ENCODE measurements at regions of chr18 and their contacts with region 1.

Region 1: GRCh38 chr18:13447626-13448334 is 229.2 kb downstream of the LDLRAD4 start:
- DNase-seq: peak; percentile 71 to 82
- ATAC-seq: peak; percentile 87 to 91 (median 89)
- H3K4me3 ChIP-seq: peak overlapping the region; percentile 40
- H3K27ac ChIP-seq: peak overlapping the region; percentile 28
- H3K4me1 ChIP-seq: peaks cover 46% of the 10 kb centered on the region
- H3K27me3 ChIP-seq: no peaks in the 10 kb centered on the region
- CTCF ChIP-seq: no peak

Region 2: DNA sequence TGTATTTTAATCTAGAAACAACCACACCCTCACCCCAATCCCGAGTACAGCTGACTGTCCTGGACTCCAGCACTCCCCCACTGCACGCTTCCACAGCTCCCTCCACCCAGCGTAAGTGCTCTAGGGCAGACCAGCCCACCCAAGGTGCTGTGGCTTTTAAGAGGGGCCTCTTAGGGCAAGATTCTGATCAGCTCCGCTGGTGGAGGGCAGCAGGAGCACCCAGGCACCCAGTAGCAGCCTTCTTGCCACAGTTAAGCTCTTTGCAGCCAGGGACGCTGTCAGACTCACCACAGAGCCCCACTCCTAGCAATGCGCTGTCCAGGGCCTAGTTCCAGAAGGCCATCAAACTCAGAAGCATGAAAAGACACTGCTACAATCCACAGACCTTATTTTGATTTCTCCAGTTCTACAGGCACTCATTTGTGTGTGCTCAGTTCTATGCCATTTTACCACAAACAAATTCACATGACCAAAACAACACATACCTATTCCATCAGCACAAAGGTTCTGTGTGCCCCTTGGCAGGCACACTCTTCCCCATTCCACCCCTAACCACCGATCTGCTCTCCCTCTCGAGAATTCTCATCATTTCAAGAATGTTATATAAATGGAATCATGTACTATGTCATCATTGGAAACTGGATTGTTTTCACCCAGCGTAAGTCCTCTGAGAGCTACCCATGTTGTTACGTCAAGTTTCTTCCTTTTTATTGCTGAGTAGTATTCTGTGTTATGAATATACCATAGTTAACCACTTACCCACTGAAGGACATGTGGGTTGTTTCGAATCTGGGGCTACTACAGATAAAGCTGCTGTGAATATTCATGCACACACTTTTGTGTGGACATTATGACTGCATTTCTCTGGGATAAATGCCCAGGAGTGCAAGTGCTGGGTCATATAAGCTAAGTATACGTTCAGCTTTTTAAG is 604.1 kb before region 1 on chr18:
- intact Hi-C with region 1: no loop called
- DNase-seq: no peak
- ATAC-seq: no peak
- H3K4me3 ChIP-seq: no peak overlapping the region
- H3K27ac ChIP-seq: no peak overlapping the region
- H3K4me1 ChIP-seq: peaks cover under 1% of the 10 kb centered on the region
- H3K27me3 ChIP-seq: no peaks in the 10 kb centered on the region
- CTCF ChIP-seq: no peak

Region 3: DNA sequence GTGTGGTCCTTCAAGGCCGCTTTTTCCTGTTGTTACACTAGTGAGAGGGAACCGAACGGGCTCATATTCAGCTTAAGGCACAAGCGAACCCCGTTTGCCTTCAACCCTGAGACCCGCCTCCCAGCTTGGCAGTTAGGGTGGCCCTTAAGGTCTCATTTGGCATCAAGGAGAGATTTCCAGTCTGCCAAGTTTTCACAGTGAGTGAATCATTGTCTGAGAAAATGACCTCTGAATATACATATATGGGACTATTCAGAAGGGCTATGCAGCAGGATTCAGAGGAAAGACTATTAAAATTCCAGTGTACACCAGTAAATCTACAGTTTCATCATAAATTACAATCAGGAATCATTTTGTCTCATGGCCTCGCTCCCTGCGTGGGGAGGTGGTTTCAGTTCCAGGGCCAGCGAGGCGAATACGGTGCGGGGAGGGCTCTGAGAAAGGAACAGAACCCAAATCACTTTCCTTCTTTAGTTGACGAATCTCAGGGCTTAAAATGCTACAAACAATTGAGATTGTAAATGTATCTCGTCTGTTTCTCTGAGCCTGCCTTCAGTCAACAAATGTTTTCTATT is 47.2 kb after region 1 on chr18:
- intact Hi-C with region 1: loop called in 1 of 2 experiments (anchors 5 kb)
- DNase-seq: no peak
- ATAC-seq: peak in 1 of 4 donors; percentile 51
- H3K4me3 ChIP-seq: no peak overlapping the region
- H3K27ac ChIP-seq: no peak overlapping the region
- H3K4me1 ChIP-seq: peaks cover 3% of the 10 kb centered on the region
- H3K27me3 ChIP-seq: no peaks in the 10 kb centered on the region
- CTCF ChIP-seq: no peak

Region 4: GRCh38 chr18:13878858-13879257 is 431.1 kb after region 1 on chr18:
- intact Hi-C with region 1: no loop called
- DNase-seq: no peak
- ATAC-seq: no peak
- H3K4me3 ChIP-seq: no peak overlapping the region
- H3K27ac ChIP-seq: no peak overlapping the region
- H3K4me1 ChIP-seq: no peaks in the 10 kb centered on the region
- H3K27me3 ChIP-seq: no peaks in the 10 kb centered on the region
- CTCF ChIP-seq: no peak

Measured in psoas muscle (tissue), 8 donors.